Natural killer cell (primary cell): ENCODE measurements at regions of chr19 and their contacts with region 1.

Region 1: DNA sequence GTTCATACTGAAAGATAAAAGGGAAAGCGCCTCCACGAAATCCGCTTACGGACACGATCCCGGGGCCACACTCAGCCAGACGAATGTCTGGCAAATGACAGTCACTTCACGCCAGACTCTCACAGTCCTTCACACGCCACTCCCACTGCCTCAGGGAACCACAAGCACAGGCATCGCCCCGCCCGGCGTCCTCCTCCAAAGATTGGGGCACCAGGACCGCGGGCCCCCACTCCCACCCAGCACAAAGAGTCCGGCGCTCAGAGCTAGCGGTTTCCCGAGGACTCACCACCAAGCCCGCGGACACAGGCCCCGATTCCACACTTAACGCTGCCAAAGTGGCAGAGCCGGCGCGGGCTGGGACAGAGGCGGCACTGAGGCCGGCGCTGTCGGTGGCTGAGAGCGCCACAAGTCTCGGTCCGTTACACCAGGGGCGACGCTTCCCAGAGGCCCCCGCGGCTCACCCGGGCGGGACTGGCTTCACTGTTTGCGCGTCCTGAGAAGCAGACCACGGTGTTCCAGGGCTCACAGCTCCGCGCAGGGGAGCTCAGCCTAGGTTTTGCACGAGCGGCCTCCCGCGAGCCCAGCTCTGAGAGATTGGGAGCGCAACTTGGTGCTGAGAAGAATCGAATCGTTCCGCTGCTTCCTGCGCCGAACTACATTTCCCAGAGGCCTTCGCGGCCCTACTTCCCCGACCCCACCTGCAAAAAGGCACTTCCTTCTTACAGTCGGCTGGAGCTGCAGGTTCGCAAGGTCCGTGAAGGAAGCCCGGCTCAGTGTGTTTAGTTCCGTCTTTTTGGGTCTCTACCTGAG is at the start of gene ZNF569:
- DNase-seq: peak; percentile 86 to 96
- ATAC-seq: peak; percentile 64 to 80 (median 67)
- H3K4me3 ChIP-seq: peak within 1 kb of the TSS; percentile 89
- H3K4me3 Mint-ChIP-seq: peak within 1 kb of the TSS; percentile 94
- H3K27ac ChIP-seq: peak within 1 kb of the TSS; percentile 92
- H3K27ac Mint-ChIP-seq: peak within 1 kb of the TSS; percentile 97 to 99
- H3K4me1 ChIP-seq: peaks cover 31% of the 10 kb centered on the region
- H3K4me1 Mint-ChIP-seq: peaks cover 35 to 49% of the 10 kb centered on the region in 2 donors
- H3K27me3 ChIP-seq: no peaks in the 10 kb centered on the region
- H3K27me3 Mint-ChIP-seq: no peaks in the 10 kb centered on the region
- CTCF ChIP-seq: no peak
- total RNA-seq, gene ZNF569: 6.3 to 9.5 (median 8.0) TPM

Region 2: DNA sequence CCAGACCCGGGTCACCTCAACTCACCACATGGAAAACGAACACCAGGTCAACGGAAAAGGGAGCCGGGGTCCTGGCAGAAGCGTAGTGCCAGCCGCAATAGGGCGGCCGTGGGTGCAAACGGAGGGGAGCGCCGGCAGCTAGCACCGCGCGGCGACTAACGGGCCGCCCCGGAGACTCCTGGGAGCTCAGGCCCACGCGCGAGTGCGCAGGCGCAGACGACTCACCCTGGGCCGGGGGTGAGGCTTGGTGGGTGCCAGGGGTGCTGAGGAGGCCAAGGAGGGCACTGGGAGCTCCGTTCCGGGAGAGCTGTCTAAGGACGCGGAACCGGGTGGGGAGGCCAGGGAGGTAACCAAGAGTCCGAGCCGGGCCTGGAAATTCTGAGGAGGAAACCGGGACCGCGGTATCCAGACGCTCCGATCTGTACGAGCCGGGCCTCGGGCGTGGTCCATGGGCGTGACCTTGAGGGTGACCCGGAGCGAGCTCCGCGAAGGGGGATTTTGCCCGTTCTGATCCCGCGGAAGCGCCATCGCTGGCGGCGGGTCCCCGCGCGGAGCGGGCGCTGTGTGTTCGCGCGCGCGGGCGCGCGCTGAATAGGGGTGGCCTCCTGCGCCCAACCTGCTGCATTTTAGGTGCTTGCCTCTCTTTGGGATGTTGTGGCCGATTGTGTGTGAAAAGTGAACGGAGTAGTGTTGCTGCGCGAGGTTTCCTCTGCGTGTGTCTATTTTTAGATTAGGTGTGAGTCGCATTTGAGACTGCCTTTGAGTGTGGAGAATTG is 861.7 kb before region 1 on chr19 and contains the start of gene ZNF382:
- intact Hi-C with region 1: loop called (anchors 5 kb)
- DNase-seq: peak; percentile 75 to 92
- ATAC-seq: peak; percentile 51 to 81 (median 62)
- H3K4me3 ChIP-seq: peak within 1 kb of the TSS; percentile 78
- H3K4me3 Mint-ChIP-seq: peak within 1 kb of the TSS; percentile 81
- H3K27ac ChIP-seq: peak within 1 kb of the TSS; percentile 90
- H3K27ac Mint-ChIP-seq: peak within 1 kb of the TSS; percentile 80 to 89
- H3K4me1 ChIP-seq: peaks cover 20% of the 10 kb centered on the region
- H3K4me1 Mint-ChIP-seq: peaks cover 20 to 28% of the 10 kb centered on the region in 2 donors
- H3K27me3 ChIP-seq: no peaks in the 10 kb centered on the region
- H3K27me3 Mint-ChIP-seq: no peaks in the 10 kb centered on the region
- CTCF ChIP-seq: no peak
- total RNA-seq, gene ZNF382: 3.2 to 8.1 (median 4.2) TPM

Region 3: DNA sequence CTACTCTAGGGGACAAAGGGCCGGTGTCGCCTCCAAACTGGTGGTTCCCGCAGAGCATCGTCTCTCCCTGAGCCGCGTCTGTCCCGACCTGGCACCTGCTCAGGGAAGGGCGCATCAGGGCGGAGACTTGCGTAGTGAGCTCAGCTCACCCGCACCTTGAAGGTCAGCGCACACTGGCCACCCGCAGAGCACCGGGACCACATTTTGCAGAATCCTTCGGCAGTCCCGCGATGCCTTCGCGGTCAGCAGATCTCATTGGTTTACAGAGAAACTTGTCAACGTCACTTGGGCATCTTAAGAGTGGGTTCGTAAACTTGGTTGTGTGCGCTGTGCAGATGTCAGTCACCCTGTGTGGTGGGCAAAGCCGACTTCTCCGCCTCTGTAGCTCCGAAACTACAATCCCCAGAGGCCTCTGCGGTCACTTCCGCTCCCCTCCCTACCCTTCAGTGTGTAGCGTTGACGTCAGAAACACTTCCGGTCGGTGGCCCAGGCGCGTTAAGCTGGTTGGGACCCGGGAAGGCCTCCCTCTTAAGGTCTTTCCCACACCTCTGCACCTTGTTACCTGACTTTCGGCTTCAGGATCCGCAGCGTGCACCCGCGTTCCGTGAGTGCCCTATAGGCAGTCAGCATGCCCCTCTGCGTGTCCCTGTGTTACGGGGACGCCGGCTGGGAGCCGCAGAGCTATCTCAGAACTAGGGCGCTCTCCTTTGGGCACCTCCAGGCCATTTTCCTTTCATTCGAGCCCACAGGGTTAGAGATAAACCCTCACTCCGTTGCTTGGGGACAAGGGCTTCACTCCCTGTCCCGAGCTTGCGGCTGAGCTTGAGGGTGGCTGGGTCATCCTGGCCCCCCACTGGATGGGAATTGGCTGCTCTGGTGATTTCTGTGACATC is 132.6 kb before region 1 on chr19:
- intact Hi-C with region 1: loop called (anchors 5 kb)
- DNase-seq: peak; percentile 79 to 96
- ATAC-seq: peak; percentile 84 to 99 (median 98)
- H3K4me3 ChIP-seq: peak overlapping the region; percentile 82
- H3K4me3 Mint-ChIP-seq: peak overlapping the region; percentile 88
- H3K27ac ChIP-seq: peak overlapping the region; percentile 83
- H3K27ac Mint-ChIP-seq: peak overlapping the region; percentile 83 to 89
- H3K4me1 ChIP-seq: peaks cover 20% of the 10 kb centered on the region
- H3K4me1 Mint-ChIP-seq: peaks cover 16 to 26% of the 10 kb centered on the region in 2 donors
- H3K27me3 ChIP-seq: no peaks in the 10 kb centered on the region
- H3K27me3 Mint-ChIP-seq: no peaks in the 10 kb centered on the region
- CTCF ChIP-seq: no peak

Region 4: DNA sequence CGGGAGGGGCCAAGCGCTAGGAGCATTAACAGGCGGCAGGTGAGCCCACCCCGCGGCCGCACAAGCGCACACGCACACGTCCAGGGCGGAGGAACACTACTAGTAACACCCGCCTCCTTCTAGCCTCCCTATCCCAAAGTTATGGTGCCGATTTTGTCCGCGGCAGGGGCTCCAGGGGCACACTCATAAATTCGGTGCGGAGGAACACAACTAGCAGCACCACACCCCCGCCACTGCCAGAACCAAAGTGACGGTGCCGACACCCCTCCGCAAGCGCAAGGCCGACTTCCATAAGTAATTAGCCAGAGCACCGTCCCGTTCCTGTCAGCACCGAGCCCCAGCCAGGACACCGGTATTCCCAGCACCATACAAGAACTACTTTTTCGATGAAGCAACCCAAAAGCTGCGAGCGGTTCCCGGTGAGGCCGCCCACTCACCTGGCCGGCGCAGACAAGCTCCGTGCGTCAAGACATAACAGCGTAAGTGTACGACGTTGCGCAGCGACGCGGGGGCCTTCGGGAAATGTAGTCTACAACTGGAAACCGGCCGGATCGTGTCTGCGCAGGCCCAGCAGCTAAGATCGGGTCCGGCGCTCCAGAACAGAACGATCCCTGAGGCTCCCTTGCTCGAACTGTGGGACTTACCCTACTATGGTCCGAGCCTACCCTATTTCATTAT is 127.4 kb after region 1 on chr19 and contains the starts of genes ZNF540 and ZNF571:
- intact Hi-C with region 1: loop called (anchors 1 kb)
- DNase-seq: peak; percentile 83 to 95
- ATAC-seq: peak; percentile 86 to 96 (median 92)
- H3K4me3 ChIP-seq: peak within 1 kb of the TSS; percentile 74
- H3K4me3 Mint-ChIP-seq: peak within 1 kb of the TSS; percentile 99
- H3K27ac ChIP-seq: peak within 1 kb of the TSS; percentile 97
- H3K27ac Mint-ChIP-seq: peak within 1 kb of the TSS; percentile 97 to 99
- H3K4me1 ChIP-seq: peaks cover 15% of the 10 kb centered on the region
- H3K4me1 Mint-ChIP-seq: peaks cover 26 to 31% of the 10 kb centered on the region in 2 donors
- H3K27me3 ChIP-seq: no peaks in the 10 kb centered on the region
- H3K27me3 Mint-ChIP-seq: no peaks in the 10 kb centered on the region
- CTCF ChIP-seq: no peak
- total RNA-seq, gene ZNF540: 6.4 to 7.5 (median 7.0) TPM
- total RNA-seq, gene ZNF571: 11.7 to 22.1 (median 19.6) TPM

Region 5: DNA sequence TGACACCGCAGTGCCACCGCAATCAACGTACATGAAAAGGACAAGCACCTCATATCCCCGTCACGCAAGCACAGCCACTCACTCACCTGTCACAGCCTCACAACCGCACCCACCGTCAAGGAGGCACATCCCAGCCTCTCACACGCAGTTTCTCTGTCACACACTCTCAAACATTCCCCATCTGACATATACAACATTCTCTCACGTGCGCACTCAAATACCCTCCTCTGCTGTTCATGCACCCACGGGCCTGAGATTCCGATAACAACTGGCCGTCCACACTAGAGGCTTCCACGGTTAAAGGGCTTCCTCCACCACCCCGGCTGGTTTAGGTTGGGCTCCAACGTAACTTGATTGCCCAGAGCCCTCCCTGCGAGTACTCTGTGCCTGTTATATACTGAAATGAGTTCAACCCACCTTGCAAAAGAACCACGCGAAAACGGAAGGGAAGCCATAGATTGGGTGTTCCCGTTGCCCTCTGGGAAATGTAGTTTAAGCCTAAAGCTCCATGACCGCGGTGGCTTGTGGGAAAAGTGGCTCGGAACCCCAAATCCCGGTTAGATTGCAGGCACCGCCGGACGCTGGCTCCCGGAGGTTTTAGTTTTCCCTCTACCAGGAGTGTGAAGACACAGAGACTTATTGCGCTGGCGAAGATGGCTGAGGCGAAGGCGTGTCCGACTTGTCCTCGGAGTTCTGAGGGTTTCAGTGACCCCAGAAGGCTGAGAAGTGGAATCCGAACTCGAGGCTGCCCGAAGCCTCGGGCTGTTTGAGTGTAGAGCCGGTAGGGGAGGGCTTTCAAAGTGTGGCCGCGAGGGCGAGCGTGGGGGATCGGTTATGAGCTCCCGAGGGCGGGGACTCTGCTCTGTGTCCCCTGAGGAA is 312.4 kb after region 1 on chr19 and contains the start of gene ZNF573:
- intact Hi-C with region 1: loop called (anchors 1 kb)
- DNase-seq: peak; percentile 69 to 96
- ATAC-seq: peak; percentile 83 to 91 (median 83)
- H3K4me3 ChIP-seq: peak within 1 kb of the TSS; percentile 90
- H3K4me3 Mint-ChIP-seq: peak within 1 kb of the TSS; percentile 99
- H3K27ac ChIP-seq: peak within 1 kb of the TSS; percentile 95
- H3K27ac Mint-ChIP-seq: peak within 1 kb of the TSS; percentile 91 to 97
- H3K4me1 ChIP-seq: peaks cover 9% of the 10 kb centered on the region
- H3K4me1 Mint-ChIP-seq: peaks cover 31 to 36% of the 10 kb centered on the region in 2 donors
- H3K27me3 ChIP-seq: no peaks in the 10 kb centered on the region
- H3K27me3 Mint-ChIP-seq: no peaks in the 10 kb centered on the region
- CTCF ChIP-seq: no peak
- total RNA-seq, gene ZNF573: 10.0 to 15.5 (median 13.4) TPM

Region 6: DNA sequence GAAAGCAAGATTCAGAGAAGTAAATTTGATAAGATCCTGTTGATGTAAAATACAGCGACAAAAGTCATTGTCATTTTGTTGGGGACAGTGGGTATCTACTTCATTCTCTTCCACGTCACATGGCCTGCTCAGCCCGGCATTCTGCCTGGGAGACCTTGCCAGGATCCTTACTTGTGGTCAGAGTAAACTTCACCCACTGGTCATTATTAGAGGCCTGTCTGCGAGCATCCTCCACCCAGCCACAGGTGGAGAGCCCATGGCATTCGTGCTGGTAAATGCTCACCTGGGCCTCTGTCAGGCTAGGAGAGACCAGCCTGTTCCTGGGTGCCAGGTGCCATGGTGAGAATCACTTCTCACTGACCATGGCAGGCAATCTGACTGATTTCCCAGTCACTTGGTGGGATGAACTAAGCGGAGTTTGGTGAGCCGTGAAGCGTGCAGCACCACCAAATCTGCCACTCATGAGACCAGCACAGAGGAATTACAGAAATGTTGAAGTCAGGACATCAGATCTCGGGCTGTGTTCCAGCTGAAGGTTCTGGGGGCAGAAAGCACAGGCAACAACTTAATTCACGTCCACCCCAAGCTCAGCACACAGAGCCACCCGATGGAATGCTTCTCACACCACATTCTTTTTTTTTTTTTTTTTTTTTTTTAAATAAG is 547.0 kb after region 1 on chr19:
- intact Hi-C with region 1: no loop called
- DNase-seq: no peak
- ATAC-seq: no peak
- H3K4me3 ChIP-seq: no peak overlapping the region
- H3K4me3 Mint-ChIP-seq: no peak overlapping the region
- H3K27ac ChIP-seq: no peak overlapping the region
- H3K27ac Mint-ChIP-seq: no peak overlapping the region
- H3K4me1 ChIP-seq: peaks cover 5% of the 10 kb centered on the region
- H3K4me1 Mint-ChIP-seq: peaks cover 6 to 20% of the 10 kb centered on the region in 2 donors
- H3K27me3 ChIP-seq: no peaks in the 10 kb centered on the region
- H3K27me3 Mint-ChIP-seq: no peaks in the 10 kb centered on the region
- CTCF ChIP-seq: no peak